CD4-positive, alpha-beta T cell (primary cell): ENCODE measurements at regions of chr17 and their contacts with region 1.

Region 1: GRCh38 chr17:40139566-40140058 is 725 bp upstream of the CASC3 start:
- DNase-seq: peak in 2 of 14 experiments; percentile 4
- ATAC-seq: peak; percentile 21
- H3K4me3 ChIP-seq: peak overlapping the region; percentile 59
- H3K4me3 Mint-ChIP-seq: peak overlapping the region; percentile 95
- H3K27ac ChIP-seq: peak overlapping the region; percentile 91 to 93
- H3K27ac Mint-ChIP-seq: peak overlapping the region; percentile 99
- H3K4me1 ChIP-seq: peaks cover 38% of the 10 kb centered on the region
- H3K4me1 Mint-ChIP-seq: peaks cover 46% of the 10 kb centered on the region
- H3K27me3 ChIP-seq: no peaks in the 10 kb centered on the region
- H3K27me3 Mint-ChIP-seq: peaks cover 5% of the 10 kb centered on the region
- CTCF ChIP-seq: no peak

Region 2: GRCh38 chr17:40062329-40063186 is 77.1 kb before region 1 on chr17 and contains the start of gene THRA:
- CTCF ChIA-PET with region 1: no interaction called
- POLR2A ChIA-PET with region 1: interaction called, 4 read pairs
- intact Hi-C with region 1: loop called in 1 of 2 experiments (anchors 2 kb)
- DNase-seq: peak; percentile 44 to 90 (median 72)
- ATAC-seq: peak; percentile 88
- H3K4me3 ChIP-seq: peak within 1 kb of the TSS; percentile 86
- H3K4me3 Mint-ChIP-seq: peak within 1 kb of the TSS; percentile 93
- H3K27ac ChIP-seq: peak within 1 kb of the TSS in 1 of 2 donors; percentile 69
- H3K27ac Mint-ChIP-seq: peak within 1 kb of the TSS; percentile 96
- H3K4me1 ChIP-seq: peaks cover 49% of the 10 kb centered on the region
- H3K4me1 Mint-ChIP-seq: peaks cover 50% of the 10 kb centered on the region
- H3K27me3 ChIP-seq: peaks cover 0 to 6% of the 10 kb centered on the region in 2 experiments
- H3K27me3 Mint-ChIP-seq: no peaks in the 10 kb centered on the region
- CTCF ChIP-seq: no peak
- total RNA-seq, gene THRA: 35.2 to 36.4 TPM

Region 3: DNA sequence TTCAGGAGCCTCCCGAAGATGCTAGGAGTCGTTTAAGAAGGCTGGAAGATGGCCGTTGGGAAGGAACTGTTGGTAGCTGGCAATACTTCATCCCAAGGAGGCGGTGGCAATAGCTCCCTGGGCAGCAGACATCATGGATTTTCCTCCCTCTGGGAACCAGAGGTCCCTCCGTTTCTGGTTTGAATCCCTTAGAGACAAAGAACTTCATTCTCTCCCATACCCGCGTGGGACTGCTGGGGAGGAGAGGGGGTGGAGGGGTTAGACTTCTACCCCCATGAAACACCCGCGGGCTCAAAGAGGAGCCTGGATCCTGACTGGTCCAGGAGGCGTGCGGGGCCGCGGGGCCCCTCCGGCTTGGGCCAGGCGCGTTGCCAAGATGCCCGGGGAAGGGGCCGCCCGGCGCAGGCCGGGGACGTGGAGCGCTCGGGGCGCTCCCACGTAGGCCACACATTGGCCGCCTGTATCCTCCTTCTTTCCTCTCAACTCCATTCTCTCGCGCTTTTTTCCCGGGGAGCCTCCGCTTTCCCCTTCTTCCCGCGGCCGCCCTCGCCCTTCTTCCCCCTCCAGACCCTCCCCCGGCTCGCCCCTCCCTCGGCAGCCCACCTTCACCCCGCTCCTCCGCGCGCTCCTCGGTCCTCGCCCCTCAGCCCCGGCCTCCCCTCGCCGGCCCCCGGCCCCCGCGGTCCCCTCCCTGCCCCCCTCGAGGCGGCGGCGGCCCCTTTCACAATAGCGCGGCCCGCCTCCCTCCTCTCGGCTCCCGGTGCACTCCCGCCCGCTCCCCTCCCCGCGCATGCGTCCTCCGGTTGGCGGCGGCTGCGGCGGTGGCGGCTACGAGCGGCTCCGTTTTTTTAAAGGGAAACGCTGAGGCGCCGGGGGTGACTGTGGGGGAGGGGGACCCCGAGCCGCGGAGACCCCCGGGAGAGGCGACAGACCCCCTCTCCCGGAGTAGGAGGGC is 18.2 kb before region 1 on chr17 and contains the start of gene MSL1:
- CTCF ChIA-PET with region 1: interaction called, 9 read pairs
- POLR2A ChIA-PET with region 1: interaction called, 118 read pairs
- intact Hi-C with region 1: loop called (anchors 1 to 2 kb)
- DNase-seq: peak; percentile 74 to 93 (median 84)
- ATAC-seq: peak; percentile 64
- H3K4me3 ChIP-seq: peak within 1 kb of the TSS; percentile 93
- H3K4me3 Mint-ChIP-seq: peak within 1 kb of the TSS; percentile 89
- H3K27ac ChIP-seq: peak within 1 kb of the TSS; percentile 55 to 83
- H3K27ac Mint-ChIP-seq: peak within 1 kb of the TSS; percentile 70
- H3K4me1 ChIP-seq: peaks cover 24% of the 10 kb centered on the region
- H3K4me1 Mint-ChIP-seq: peaks cover 41% of the 10 kb centered on the region
- H3K27me3 ChIP-seq: no peaks in the 10 kb centered on the region
- H3K27me3 Mint-ChIP-seq: no peaks in the 10 kb centered on the region
- CTCF ChIP-seq: no peak
- total RNA-seq, gene MSL1: 77.0 to 79.2 TPM

Region 4: DNA sequence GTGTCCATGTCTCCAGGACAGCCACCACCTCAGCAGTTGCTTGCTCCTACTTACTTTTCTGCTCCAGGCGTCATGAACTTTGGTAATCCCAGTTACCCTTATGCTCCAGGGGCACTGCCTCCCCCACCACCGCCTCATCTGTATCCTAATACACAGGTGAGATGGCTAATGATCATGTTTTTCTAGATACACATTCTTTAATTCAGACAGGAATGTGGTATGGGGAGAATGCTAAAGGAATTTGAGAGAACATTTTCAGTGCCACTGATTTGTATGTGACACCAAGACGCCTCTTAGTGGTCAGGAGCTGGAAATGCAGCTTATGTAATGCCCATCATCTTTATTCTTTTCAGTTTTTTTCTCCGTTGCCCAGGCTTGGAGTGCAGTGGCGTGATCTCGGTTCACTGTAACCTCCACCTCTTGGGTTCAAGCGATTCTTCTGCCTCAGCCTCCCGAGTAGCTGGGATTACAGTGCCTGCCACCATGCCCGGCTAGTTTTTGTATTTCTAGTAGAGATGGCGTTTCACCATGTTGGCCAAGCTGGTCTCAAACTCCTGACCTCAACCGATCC is 28.7 kb after region 1 on chr17:
- CTCF ChIA-PET with region 1: interaction called, 13 read pairs
- POLR2A ChIA-PET with region 1: interaction called, 10 read pairs
- intact Hi-C with region 1: loop called in 1 of 2 experiments (anchors 2 kb)
- DNase-seq: peak in 8 of 14 experiments; percentile 14 to 82 (median 43)
- ATAC-seq: peak; percentile 89
- H3K4me3 ChIP-seq: no peak overlapping the region
- H3K4me3 Mint-ChIP-seq: no peak overlapping the region
- H3K27ac ChIP-seq: no peak overlapping the region
- H3K27ac Mint-ChIP-seq: peak overlapping the region; percentile 80
- H3K4me1 ChIP-seq: no peaks in the 10 kb centered on the region
- H3K4me1 Mint-ChIP-seq: peaks cover 9% of the 10 kb centered on the region
- H3K27me3 ChIP-seq: no peaks in the 10 kb centered on the region
- H3K27me3 Mint-ChIP-seq: no peaks in the 10 kb centered on the region
- CTCF ChIP-seq: peak; percentile 87

Region 5: DNA sequence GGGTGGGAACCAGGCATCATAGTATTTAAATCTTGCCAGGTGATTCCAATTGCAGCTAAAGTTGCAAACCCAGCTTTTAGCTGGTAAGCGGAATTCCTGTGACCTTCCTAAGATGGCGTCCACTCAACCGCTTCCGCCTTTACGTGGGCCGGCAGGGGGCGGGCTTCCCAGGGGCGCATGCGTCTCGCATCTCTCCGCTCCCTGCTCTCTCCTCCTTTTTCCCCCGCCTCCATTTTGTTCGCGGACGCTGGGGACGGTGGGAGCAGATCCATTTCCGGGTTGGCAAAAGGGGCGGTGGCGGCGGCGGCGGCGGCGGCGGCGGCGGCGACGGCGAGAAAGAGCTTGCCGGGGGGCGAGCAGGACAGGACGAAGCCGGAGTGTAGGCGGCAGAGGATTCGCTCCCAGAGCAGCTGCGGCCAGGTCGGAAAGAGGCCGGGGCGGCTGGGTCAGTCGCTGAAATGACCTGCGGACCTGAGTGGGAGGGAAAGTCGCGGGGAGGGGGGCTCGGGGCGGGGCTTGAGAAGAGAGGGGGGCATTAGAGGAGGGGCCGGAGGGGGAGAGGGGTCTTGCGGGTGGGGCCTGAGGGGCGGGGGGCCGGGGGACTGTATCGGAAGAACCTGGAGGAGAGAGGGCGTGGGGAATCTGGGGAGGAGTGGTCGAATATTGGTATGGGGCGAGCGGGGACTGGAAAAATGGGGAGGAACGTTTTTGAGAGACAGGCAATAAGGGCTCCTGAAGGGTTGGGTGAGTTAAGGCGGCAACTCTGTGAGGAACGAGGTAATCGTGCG is 79.7 kb after region 1 on chr17 and contains the start of gene WIPF2:
- CTCF ChIA-PET with region 1: no interaction called
- POLR2A ChIA-PET with region 1: interaction called, 17 read pairs
- intact Hi-C with region 1: no loop called
- DNase-seq: peak; percentile 91 to 98 (median 95)
- ATAC-seq: peak; percentile 90
- H3K4me3 ChIP-seq: peak within 1 kb of the TSS; percentile 58
- H3K4me3 Mint-ChIP-seq: peak within 1 kb of the TSS; percentile 94
- H3K27ac ChIP-seq: peak within 1 kb of the TSS; percentile 86 to 97
- H3K27ac Mint-ChIP-seq: peak within 1 kb of the TSS; percentile 88
- H3K4me1 ChIP-seq: peaks cover 25% of the 10 kb centered on the region
- H3K4me1 Mint-ChIP-seq: peaks cover 34% of the 10 kb centered on the region
- H3K27me3 ChIP-seq: no peaks in the 10 kb centered on the region
- H3K27me3 Mint-ChIP-seq: no peaks in the 10 kb centered on the region
- CTCF ChIP-seq: peak; percentile 62
- total RNA-seq, gene WIPF2: 17.3 to 21.3 TPM